IMR-90 (cell line): ENCODE measurements at regions of chr2 and their contacts with region 1.

Region 1: DNA sequence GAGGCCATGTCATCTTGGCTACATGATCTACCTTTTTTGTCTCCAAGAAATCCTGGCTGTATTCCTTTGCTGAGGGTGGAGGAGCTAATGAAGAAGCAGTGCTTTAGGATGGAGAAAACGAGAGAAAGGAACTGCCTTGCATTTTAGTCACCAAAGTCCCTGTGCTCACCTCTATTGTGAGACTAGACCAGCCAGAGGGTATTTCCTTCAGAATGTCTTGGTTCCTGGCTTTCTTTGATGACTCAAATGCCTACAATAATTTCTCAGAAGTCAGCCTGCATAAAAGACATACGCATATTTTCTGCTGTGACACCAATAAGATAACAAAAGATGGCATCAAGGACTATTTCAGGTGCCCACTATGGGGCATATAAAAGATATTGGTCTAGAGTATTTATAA is 10.8 kb downstream of the SF3B6 start:
- DNase-seq: no peak
- ATAC-seq: no peak
- H3K4me3 ChIP-seq: no peak overlapping the region
- H3K27ac ChIP-seq: no peak overlapping the region
- H3K4me1 ChIP-seq: no peaks in the 10 kb centered on the region
- H3K27me3 ChIP-seq: no peaks in the 10 kb centered on the region
- CTCF ChIP-seq: no peak
- POLR2A ChIP-seq: no peak
- RAD21 ChIP-seq: no peak

Region 2: GRCh38 chr2:24075915-24076848 is 10.8 kb after region 1 on chr2 and contains the start of gene SF3B6:
- CTCF ChIA-PET with region 1: no interaction called
- POLR2A ChIA-PET with region 1: interaction called, 10 read pairs
- dilution Hi-C with region 1: no loop called
- in situ Hi-C with region 1: no loop called
- intact Hi-C with region 1: no loop called
- DNase-seq: peak; percentile 99
- ATAC-seq: peak; percentile 93
- H3K4me3 ChIP-seq: peak within 1 kb of the TSS; percentile 73
- H3K27ac ChIP-seq: peak within 1 kb of the TSS; percentile 68
- H3K4me1 ChIP-seq: peaks cover 3% of the 10 kb centered on the region; the same call in 1 of the 2 replicates
- H3K27me3 ChIP-seq: no peaks in the 10 kb centered on the region
- CTCF ChIP-seq: no peak
- POLR2A ChIP-seq: peak; percentile 59; the same call in 1 of the 2 replicates
- RAD21 ChIP-seq: no peak
- total RNA-seq, gene SF3B6: 143 and 224 TPM in 2 replicates

Region 3: GRCh38 chr2:25063876-25064660 is 998.7 kb after region 1 on chr2:
- CTCF ChIA-PET with region 1: no interaction called
- POLR2A ChIA-PET with region 1: no interaction called
- dilution Hi-C with region 1: no loop called
- in situ Hi-C with region 1: no loop called
- intact Hi-C with region 1: no loop called
- DNase-seq: no peak
- ATAC-seq: no peak
- H3K4me3 ChIP-seq: no peak overlapping the region
- H3K27ac ChIP-seq: no peak overlapping the region
- H3K4me1 ChIP-seq: no peaks in the 10 kb centered on the region
- H3K27me3 ChIP-seq: no peaks in the 10 kb centered on the region; the same call in 1 of the 2 replicates
- CTCF ChIP-seq: no peak
- POLR2A ChIP-seq: no peak
- RAD21 ChIP-seq: no peak

Region 4: GRCh38 chr2:25740810-25741381 is 1675.6 kb after region 1 on chr2:
- CTCF ChIA-PET with region 1: no interaction called
- POLR2A ChIA-PET with region 1: no interaction called
- dilution Hi-C with region 1: no loop called
- in situ Hi-C with region 1: no loop called
- intact Hi-C with region 1: no loop called
- DNase-seq: no peak
- ATAC-seq: peak; percentile 27; the same call in 1 of the 2 replicates
- H3K4me3 ChIP-seq: no peak overlapping the region
- H3K27ac ChIP-seq: no peak overlapping the region
- H3K4me1 ChIP-seq: no peaks in the 10 kb centered on the region
- H3K27me3 ChIP-seq: no peaks in the 10 kb centered on the region
- CTCF ChIP-seq: no peak
- POLR2A ChIP-seq: no peak
- RAD21 ChIP-seq: no peak